ENCODE measurements at regions of chr1 and their contacts with region 1.

Region 1: GRCh38 chr1:99685516-99686180 is 39.7 kb downstream of the PALMD start:
- DNase-seq: peak; percentile 50
- H3K4me3 Mint-ChIP-seq: no peak overlapping the region
- H3K27ac Mint-ChIP-seq: no peak overlapping the region
- H3K4me1 Mint-ChIP-seq: peaks cover 2% of the 10 kb centered on the region
- H3K27me3 Mint-ChIP-seq: peaks cover 19% of the 10 kb centered on the region

Region 2: GRCh38 chr1:99279525-99279924 is 406.1 kb before region 1 on chr1:
- CTCF ChIA-PET with region 1: no interaction called
- POLR2A ChIA-PET with region 1: no interaction called
- DNase-seq: no peak
- H3K4me3 Mint-ChIP-seq: no peak overlapping the region
- H3K27ac Mint-ChIP-seq: no peak overlapping the region
- H3K4me1 Mint-ChIP-seq: no peaks in the 10 kb centered on the region
- H3K27me3 Mint-ChIP-seq: no peaks in the 10 kb centered on the region

Region 3: DNA sequence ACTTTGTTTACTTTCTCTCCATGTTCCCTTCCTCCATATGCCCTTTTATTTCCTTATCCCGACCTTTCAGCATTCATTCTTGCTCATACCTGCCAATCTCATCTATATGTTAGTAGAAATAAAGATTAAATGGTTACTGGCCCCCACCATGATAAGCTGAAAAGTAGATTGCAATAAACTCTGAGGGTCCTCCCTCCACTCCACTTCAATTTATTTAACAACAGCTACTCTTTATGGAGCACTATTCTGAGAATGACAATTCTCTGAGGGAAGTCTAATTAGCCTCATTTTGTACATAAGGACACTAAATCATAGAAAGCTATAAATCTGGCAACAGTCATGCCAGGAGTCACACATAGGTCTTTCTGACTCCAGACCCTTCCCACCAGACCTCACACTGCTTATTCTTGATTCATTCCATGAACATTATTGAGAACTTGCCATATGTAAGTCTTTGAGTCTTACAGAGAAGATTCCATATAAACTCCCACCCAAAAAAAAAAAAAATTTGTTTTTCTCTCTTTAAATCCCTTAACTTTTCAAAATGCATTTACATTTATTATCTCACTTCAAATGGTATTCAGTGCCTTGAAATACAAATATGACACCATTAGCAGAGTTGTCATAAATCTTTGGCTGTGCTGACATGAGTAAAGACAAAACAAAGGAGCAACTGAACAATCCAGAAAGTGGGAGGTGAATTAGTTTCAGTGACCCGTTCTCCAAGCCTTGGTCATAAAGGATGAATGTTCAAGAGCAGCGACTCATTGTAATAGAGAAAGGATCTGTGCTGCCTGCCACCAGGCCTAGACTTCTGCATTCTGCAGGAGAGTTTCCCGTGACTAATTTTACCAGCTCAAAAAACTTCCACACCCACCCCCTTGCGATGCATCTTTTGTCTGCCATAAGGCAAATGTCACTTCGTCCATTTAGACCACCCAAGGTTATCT is 11.3 kb before region 1 on chr1:
- CTCF ChIA-PET with region 1: interaction called, 10 read pairs
- POLR2A ChIA-PET with region 1: no interaction called
- DNase-seq: no peak
- H3K4me3 Mint-ChIP-seq: no peak overlapping the region
- H3K27ac Mint-ChIP-seq: no peak overlapping the region
- H3K4me1 Mint-ChIP-seq: no peaks in the 10 kb centered on the region
- H3K27me3 Mint-ChIP-seq: peaks cover 16% of the 10 kb centered on the region

Region 4: GRCh38 chr1:99707535-99708142 is 22.0 kb after region 1 on chr1:
- CTCF ChIA-PET with region 1: interaction called, 14 read pairs
- POLR2A ChIA-PET with region 1: no interaction called
- DNase-seq: peak; percentile 71
- H3K4me3 Mint-ChIP-seq: no peak overlapping the region
- H3K27ac Mint-ChIP-seq: no peak overlapping the region
- H3K4me1 Mint-ChIP-seq: peaks cover 22% of the 10 kb centered on the region
- H3K27me3 Mint-ChIP-seq: no peaks in the 10 kb centered on the region

Region 5: GRCh38 chr1:99745061-99745460 is 59.4 kb after region 1 on chr1:
- CTCF ChIA-PET with region 1: no interaction called
- POLR2A ChIA-PET with region 1: no interaction called
- DNase-seq: no peak
- H3K4me3 Mint-ChIP-seq: no peak overlapping the region
- H3K27ac Mint-ChIP-seq: no peak overlapping the region
- H3K4me1 Mint-ChIP-seq: peaks cover under 1% of the 10 kb centered on the region
- H3K27me3 Mint-ChIP-seq: peaks cover 6% of the 10 kb centered on the region

Region 6: DNA sequence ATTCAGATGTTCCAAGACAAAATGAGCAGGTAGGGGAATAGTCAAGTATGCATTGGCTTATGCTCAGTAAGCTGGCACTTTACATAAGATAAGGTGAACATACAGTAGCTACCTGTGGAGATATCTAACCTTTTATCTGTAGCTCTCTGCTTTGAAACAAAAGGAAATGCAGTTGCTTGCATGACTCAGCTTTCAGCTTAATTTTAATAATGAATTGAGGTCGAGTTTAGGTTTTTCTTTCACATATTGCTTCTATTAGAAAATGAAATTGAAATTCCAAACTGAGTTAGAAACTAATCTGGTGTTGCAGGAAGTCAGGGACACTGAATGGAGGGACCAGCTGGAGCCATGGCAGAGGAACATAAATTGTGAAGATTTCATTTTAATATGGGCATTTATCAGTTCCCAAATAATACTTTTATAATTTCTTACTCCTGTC is 72.4 kb after region 1 on chr1:
- CTCF ChIA-PET with region 1: no interaction called
- POLR2A ChIA-PET with region 1: no interaction called
- DNase-seq: no peak
- H3K4me3 Mint-ChIP-seq: no peak overlapping the region
- H3K27ac Mint-ChIP-seq: no peak overlapping the region
- H3K4me1 Mint-ChIP-seq: peaks cover 10% of the 10 kb centered on the region
- H3K27me3 Mint-ChIP-seq: peaks cover 10% of the 10 kb centered on the region